CD4-positive, alpha-beta memory T cell (primary cell): ENCODE measurements at regions of chr5 and their contacts with region 1.

Region 1: DNA sequence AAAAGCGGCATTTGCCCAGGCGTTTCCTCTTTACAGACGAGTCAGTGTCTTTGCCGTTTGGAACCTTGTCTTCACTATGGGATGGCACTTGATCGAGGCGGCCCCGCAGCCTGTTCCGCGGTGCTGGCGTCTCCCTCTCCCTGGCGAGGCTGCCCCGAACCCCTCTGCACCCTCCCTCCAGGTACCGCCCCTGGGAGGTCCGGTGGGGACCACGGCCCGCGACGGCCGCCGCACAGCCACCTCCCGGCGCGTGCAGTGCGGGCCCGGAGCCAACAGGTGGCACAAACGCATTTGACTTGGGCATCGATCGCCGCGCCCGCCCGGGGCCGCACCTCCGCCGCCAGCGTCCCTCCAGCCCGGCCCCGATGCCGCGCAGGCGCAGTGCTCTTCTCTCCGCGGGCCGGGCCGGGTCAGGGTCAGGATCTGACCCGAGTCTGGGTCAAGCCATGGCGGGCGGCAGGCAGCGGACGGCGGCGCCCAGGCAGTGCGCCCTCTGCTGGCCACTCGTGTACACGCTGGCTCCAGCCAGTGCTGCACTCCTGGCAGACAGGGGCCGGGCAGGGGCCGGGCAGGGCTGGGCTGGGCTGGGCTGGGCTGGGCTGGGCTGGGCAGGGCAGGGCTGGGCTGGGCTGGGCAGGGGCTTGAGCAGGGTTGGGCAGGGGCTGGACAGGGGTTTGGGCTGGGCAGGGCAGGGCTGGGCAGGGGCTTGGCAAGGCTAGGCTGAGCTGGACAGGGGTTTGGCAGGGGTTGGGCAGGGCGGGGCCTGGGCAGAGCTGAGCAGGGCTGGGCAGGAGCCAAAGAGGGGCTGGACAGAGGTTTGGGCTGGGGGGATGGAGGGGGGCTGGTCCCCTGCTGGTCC is 155.8 kb upstream of the IRX4 start:
- DNase-seq: peak; percentile 45 to 66 (median 56)
- H3K4me3 ChIP-seq: peak overlapping the region in 1 of 2 donors; percentile 34
- H3K4me3 Mint-ChIP-seq: peak overlapping the region; percentile 57 to 81 (median 68)
- H3K27ac ChIP-seq: no peak overlapping the region
- H3K27ac Mint-ChIP-seq: no peak overlapping the region
- H3K4me1 ChIP-seq: no peaks in the 10 kb centered on the region
- H3K4me1 Mint-ChIP-seq: no peaks in the 10 kb centered on the region
- H3K27me3 ChIP-seq: peaks cover 14% of the 10 kb centered on the region
- H3K27me3 Mint-ChIP-seq: peaks cover 17 to 26% of the 10 kb centered on the region in 2 donors

Region 2: GRCh38 chr5:1763548-1763911 is 275.0 kb before region 1 on chr5:
- CTCF ChIA-PET with region 1: interaction called, 16 read pairs
- POLR2A ChIA-PET with region 1: no interaction called
- intact Hi-C with region 1: loop called (anchors 1 kb)
- DNase-seq: peak in 4 of 5 donors; percentile 12 to 30 (median 24)
- H3K4me3 ChIP-seq: no peak overlapping the region
- H3K4me3 Mint-ChIP-seq: no peak overlapping the region
- H3K27ac ChIP-seq: no peak overlapping the region
- H3K27ac Mint-ChIP-seq: no peak overlapping the region
- H3K4me1 ChIP-seq: no peaks in the 10 kb centered on the region
- H3K4me1 Mint-ChIP-seq: no peaks in the 10 kb centered on the region
- H3K27me3 ChIP-seq: no peaks in the 10 kb centered on the region
- H3K27me3 Mint-ChIP-seq: peaks cover 9 to 20% of the 10 kb centered on the region in 2 donors